Aorta (tissue), 5 donors: ENCODE measurements at regions of chr11 and their contacts with region 1.

Region 1: GRCh38 chr11:18105802-18106574 is at the start of gene SAAL1:
- DNase-seq: peak; percentile 89 to 96
- ATAC-seq: peak; percentile 96
- H3K4me3 ChIP-seq: peak within 1 kb of the TSS; percentile 84 to 91
- H3K27ac ChIP-seq: no peak within 1 kb of the TSS
- H3K4me1 ChIP-seq: peaks cover 1 to 6% of the 10 kb centered on the region in 2 donors
- H3K27me3 ChIP-seq: no peaks in the 10 kb centered on the region
- total RNA-seq, gene SAAL1: 9.3 to 15.8 TPM

Region 2: DNA sequence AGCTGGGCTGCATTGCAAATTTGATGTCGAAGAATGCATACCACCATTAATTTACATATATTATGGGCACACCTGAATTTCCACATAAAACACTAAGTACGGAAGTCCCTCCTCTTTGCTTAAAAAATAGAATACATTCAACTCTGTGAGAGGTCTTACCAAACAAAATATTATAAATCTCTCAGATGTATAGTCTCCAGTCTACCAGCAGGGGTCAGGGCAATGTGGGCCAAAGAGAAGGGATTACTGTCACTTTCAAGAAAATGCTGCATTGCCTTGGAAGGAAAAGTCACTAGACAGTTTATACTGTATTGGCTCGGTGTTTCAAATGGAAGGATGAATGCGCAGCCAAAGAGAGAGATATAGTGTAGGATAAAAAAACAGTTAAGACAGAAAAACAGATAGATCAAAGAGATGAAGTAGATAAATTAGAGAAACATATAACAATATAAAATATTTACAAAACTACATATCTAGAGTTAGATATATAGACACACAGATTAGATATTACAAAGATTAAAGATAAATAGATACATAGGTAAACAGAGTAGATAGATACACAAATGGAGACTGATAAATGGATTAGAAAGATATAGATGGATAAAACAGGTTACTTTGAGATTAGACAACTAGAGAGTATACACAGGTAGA is 114.1 kb before region 1 on chr11:
- intact Hi-C with region 1: loop called in 1 of 2 experiments (anchors 5 kb)
- DNase-seq: no peak
- ATAC-seq: peak; percentile 68
- H3K4me3 ChIP-seq: no peak overlapping the region
- H3K27ac ChIP-seq: no peak overlapping the region
- H3K4me1 ChIP-seq: peaks cover 0 to 4% of the 10 kb centered on the region in 2 donors
- H3K27me3 ChIP-seq: no peaks in the 10 kb centered on the region

Region 3: DNA sequence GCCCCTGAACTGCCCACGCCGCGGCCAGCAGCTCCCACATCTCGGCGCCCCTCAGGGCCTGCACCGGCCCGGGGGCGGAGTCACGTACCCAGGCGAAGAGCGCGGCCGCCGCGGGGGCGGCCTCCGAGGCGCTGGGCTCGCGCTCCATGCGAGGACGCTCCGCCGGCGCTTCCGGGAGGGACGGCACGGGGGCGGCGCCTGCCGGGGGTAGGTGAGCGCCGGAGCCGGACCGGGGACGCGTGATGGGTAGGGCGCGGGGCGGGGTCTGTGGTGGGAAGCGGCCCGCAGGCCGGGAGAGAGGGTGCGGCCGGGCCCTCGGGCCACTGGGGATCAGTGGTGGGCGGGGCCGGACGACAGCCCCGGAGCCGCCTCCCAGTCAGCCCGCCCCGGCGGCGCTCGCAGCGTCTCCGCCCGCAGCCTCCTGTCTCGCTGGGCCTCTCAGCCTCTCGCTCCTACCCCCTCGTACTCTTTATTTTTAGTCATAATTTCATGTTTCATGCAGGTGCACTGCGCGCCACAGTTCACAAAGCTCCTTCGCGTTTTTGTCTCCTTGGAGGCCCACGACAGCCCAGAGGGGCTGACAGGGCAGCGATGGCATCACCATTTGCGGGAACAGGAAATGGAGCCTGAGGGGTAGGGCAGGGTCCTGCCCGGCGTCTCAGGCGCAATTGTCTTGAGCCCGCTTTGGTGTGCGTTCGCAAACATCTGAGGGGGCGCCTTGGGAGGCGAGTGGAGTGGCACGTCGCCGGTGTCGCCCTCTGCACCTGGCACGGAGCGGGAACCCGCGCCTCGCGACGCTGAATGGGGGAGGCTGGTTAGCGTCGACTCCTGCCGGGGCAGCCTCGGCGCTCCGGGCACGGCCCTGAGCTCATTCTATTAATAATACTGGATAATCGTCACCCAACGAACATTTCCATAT is 92.9 kb before region 1 on chr11 and contains the start of gene SERGEF:
- intact Hi-C with region 1: loop called (anchors 5 to 10 kb)
- DNase-seq: peak; percentile 97 to 98
- ATAC-seq: peak; percentile 98
- H3K4me3 ChIP-seq: peak within 1 kb of the TSS; percentile 55 to 76
- H3K27ac ChIP-seq: peak within 1 kb of the TSS; percentile 49 to 63
- H3K4me1 ChIP-seq: no peaks in the 10 kb centered on the region
- H3K27me3 ChIP-seq: no peaks in the 10 kb centered on the region
- total RNA-seq, gene SERGEF: 43.1 to 48.3 TPM

Region 4: DNA sequence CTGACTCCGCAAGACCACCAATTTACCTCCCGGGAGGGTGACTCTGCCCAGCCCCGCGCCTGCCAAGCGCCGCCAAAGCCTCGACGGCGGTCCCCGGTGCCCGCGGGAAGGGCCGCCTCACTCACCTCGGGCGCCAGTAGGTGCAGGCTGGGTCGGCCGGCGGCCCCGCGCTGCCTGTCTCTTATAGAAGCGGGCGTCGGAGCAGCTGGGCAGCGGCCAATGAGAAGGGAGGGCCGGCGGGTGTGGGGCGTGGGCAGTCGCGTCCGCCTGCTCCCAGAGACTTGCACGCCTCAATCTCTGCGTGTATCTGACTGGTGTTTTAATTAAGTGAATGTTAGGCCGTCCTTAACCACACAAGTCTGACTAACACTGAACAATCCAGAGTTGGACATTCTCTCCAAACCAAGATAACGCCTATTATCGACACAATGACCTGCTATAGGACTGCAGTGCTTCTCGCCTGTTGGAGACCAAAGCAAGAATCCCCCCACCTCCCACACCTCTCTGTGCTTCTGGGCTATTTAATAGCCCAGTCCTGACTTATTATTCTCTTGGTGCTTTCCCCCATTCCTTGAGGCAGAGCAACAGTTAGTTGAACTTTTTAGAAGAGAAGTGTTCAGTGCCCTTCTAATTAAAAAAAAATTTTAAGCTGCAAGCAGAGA is 59.7 kb before region 1 on chr11 and contains the start of gene TPH1:
- intact Hi-C with region 1: loop called (anchors 5 to 10 kb)
- DNase-seq: peak; percentile 71 to 86
- ATAC-seq: peak; percentile 85
- H3K4me3 ChIP-seq: peak within 1 kb of the TSS; percentile 57 to 81
- H3K27ac ChIP-seq: peak within 1 kb of the TSS; percentile 67 to 68
- H3K4me1 ChIP-seq: no peaks in the 10 kb centered on the region
- H3K27me3 ChIP-seq: no peaks in the 10 kb centered on the region
- total RNA-seq, gene TPH1: 14.9 to 20.0 TPM

Region 5: GRCh38 chr11:18132341-18132740 is 26.4 kb after region 1 on chr11 and contains the start of gene MRGPRX3:
- intact Hi-C with region 1: no loop called
- DNase-seq: no peak
- ATAC-seq: no peak
- H3K4me3 ChIP-seq: no peak within 1 kb of the TSS
- H3K27ac ChIP-seq: no peak within 1 kb of the TSS
- H3K4me1 ChIP-seq: no peaks in the 10 kb centered on the region
- H3K27me3 ChIP-seq: no peaks in the 10 kb centered on the region
- total RNA-seq, gene MRGPRX3: not detected